CD4-positive, alpha-beta T cell (primary cell): ENCODE measurements at regions of chr5 and their contacts with region 1.

Region 1: GRCh38 chr5:172839669-172840431 is 5.8 kb downstream of the ERGIC1 start:
- DNase-seq: no peak
- ATAC-seq: no peak
- H3K4me3 ChIP-seq: no peak overlapping the region
- H3K4me3 Mint-ChIP-seq: no peak overlapping the region
- H3K27ac ChIP-seq: no peak overlapping the region
- H3K27ac Mint-ChIP-seq: peak overlapping the region; percentile 12
- H3K4me1 ChIP-seq: peaks cover 42% of the 10 kb centered on the region
- H3K4me1 Mint-ChIP-seq: peaks cover 68% of the 10 kb centered on the region
- H3K27me3 ChIP-seq: no peaks in the 10 kb centered on the region
- H3K27me3 Mint-ChIP-seq: no peaks in the 10 kb centered on the region
- CTCF ChIP-seq: no peak

Region 2: GRCh38 chr5:172795318-172795977 is 44.4 kb before region 1 on chr5:
- CTCF ChIA-PET with region 1: no interaction called
- POLR2A ChIA-PET with region 1: no interaction called
- intact Hi-C with region 1: no loop called
- DNase-seq: no peak
- ATAC-seq: no peak
- H3K4me3 ChIP-seq: no peak overlapping the region
- H3K4me3 Mint-ChIP-seq: no peak overlapping the region
- H3K27ac ChIP-seq: no peak overlapping the region
- H3K27ac Mint-ChIP-seq: no peak overlapping the region
- H3K4me1 ChIP-seq: peaks cover 9% of the 10 kb centered on the region
- H3K4me1 Mint-ChIP-seq: no peaks in the 10 kb centered on the region
- H3K27me3 ChIP-seq: no peaks in the 10 kb centered on the region
- H3K27me3 Mint-ChIP-seq: no peaks in the 10 kb centered on the region
- CTCF ChIP-seq: no peak

Region 3: DNA sequence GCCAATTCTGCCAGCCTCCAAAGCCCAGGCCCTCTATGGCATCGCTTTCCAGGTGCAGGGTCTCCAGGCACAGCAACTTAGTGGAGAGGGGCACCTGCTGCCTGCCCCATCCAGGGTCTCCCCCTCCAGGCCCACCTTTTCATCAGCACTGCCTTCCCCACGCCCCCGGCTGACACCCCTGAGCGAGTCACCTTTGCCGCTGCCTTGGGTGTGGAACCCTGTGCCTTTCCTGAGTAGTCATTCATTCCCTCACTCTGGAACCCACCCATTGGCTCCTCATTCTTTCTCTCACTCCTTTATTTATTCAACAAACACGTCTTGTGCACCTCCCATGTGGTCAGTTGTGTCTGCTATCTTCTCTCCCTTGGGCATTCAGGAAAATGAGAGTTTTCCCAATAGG is 104.9 kb after region 1 on chr5:
- CTCF ChIA-PET with region 1: no interaction called
- POLR2A ChIA-PET with region 1: no interaction called
- intact Hi-C with region 1: loop called in 1 of 2 experiments (anchors 5 kb)
- DNase-seq: no peak
- ATAC-seq: no peak
- H3K4me3 ChIP-seq: no peak overlapping the region
- H3K4me3 Mint-ChIP-seq: no peak overlapping the region
- H3K27ac ChIP-seq: no peak overlapping the region
- H3K27ac Mint-ChIP-seq: no peak overlapping the region
- H3K4me1 ChIP-seq: no peaks in the 10 kb centered on the region
- H3K4me1 Mint-ChIP-seq: no peaks in the 10 kb centered on the region
- H3K27me3 ChIP-seq: no peaks in the 10 kb centered on the region
- H3K27me3 Mint-ChIP-seq: no peaks in the 10 kb centered on the region
- CTCF ChIP-seq: no peak